ENCODE measurements at regions of chrX and their contacts with region 1.

Region 1: GRCh38 chrX:106397801-106398538 is 213.8 kb upstream of the RADX start:
- DNase-seq: no peak
- H3K4me3 ChIP-seq: no peak overlapping the region
- H3K27ac ChIP-seq: no peak overlapping the region
- H3K4me1 ChIP-seq: no peaks in the 10 kb centered on the region
- H3K27me3 ChIP-seq: no peaks in the 10 kb centered on the region
- CTCF ChIP-seq: no peak

Region 2: GRCh38 chrX:105876658-105877057 is 521.3 kb before region 1 on chrX:
- intact Hi-C with region 1: loop called (anchors 10 kb)
- DNase-seq: no peak
- H3K4me3 ChIP-seq: no peak overlapping the region
- H3K27ac ChIP-seq: no peak overlapping the region
- H3K4me1 ChIP-seq: no peaks in the 10 kb centered on the region
- H3K27me3 ChIP-seq: no peaks in the 10 kb centered on the region
- CTCF ChIP-seq: peak; percentile 20

Region 3: DNA sequence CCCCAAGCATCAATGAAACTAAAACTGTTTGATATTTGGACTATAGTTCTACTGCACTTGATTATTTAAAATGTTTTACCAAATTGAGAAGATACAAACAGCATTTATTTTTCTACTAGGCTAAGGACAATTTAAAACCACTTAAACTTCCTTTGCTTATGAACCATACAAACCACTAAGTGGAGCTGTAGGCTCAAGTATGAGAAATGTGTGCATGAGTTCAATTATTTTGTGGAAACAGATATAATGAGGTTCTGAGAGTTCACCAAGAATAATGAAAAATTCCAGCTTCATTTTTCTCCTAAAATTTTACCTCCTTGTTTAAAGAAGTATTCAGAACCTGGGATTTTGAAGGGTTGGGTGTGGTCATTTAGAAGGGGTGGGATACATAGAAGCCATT is 422.6 kb before region 1 on chrX:
- intact Hi-C with region 1: loop called (anchors 5 kb)
- DNase-seq: no peak
- H3K4me3 ChIP-seq: no peak overlapping the region
- H3K27ac ChIP-seq: no peak overlapping the region
- H3K4me1 ChIP-seq: no peaks in the 10 kb centered on the region
- H3K27me3 ChIP-seq: no peaks in the 10 kb centered on the region
- CTCF ChIP-seq: no peak

Region 4: GRCh38 chrX:106612393-106612763 is 214.4 kb after region 1 on chrX:
- intact Hi-C with region 1: no loop called
- DNase-seq: no peak
- H3K4me3 ChIP-seq: peak overlapping the region; percentile 41
- H3K27ac ChIP-seq: no peak overlapping the region
- H3K4me1 ChIP-seq: no peaks in the 10 kb centered on the region
- H3K27me3 ChIP-seq: no peaks in the 10 kb centered on the region
- CTCF ChIP-seq: no peak

Region 5: GRCh38 chrX:106791495-106791894 is 393.5 kb after region 1 on chrX:
- intact Hi-C with region 1: no loop called
- DNase-seq: no peak
- H3K4me3 ChIP-seq: no peak overlapping the region
- H3K27ac ChIP-seq: no peak overlapping the region
- H3K4me1 ChIP-seq: no peaks in the 10 kb centered on the region
- H3K27me3 ChIP-seq: no peaks in the 10 kb centered on the region
- CTCF ChIP-seq: no peak

Measured in colonic mucosa (tissue), 4 donors.